Caco-2 (cell line): ENCODE measurements at regions of chr20 and their contacts with region 1.

Region 1: GRCh38 chr20:48556956-48557355 is 270.8 kb downstream of the PREX1 start:
- DNase-seq: no peak
- H3K4me3 ChIP-seq: no peak overlapping the region
- H3K4me3 Mint-ChIP-seq: no peak overlapping the region
- H3K27ac Mint-ChIP-seq: no peak overlapping the region
- H3K4me1 ChIP-seq: peaks cover 7% of the 10 kb centered on the region; the same call in 1 of the 2 replicates
- H3K4me1 Mint-ChIP-seq: peaks cover 5% of the 10 kb centered on the region
- H3K27me3 ChIP-seq: no peaks in the 10 kb centered on the region
- H3K27me3 Mint-ChIP-seq: no peaks in the 10 kb centered on the region
- CTCF ChIP-seq: no peak

Region 2: GRCh38 chr20:49199729-49200293 is 642.9 kb after region 1 on chr20:
- CTCF ChIA-PET with region 1: no interaction called
- POLR2A ChIA-PET with region 1: interaction called, 10 read pairs
- intact Hi-C with region 1: no loop called
- DNase-seq: peak in 1 of 2 experiments; percentile 12
- H3K4me3 ChIP-seq: no peak overlapping the region
- H3K4me3 Mint-ChIP-seq: no peak overlapping the region
- H3K27ac Mint-ChIP-seq: no peak overlapping the region
- H3K4me1 ChIP-seq: no peaks in the 10 kb centered on the region
- H3K4me1 Mint-ChIP-seq: no peaks in the 10 kb centered on the region
- H3K27me3 ChIP-seq: no peaks in the 10 kb centered on the region
- H3K27me3 Mint-ChIP-seq: no peaks in the 10 kb centered on the region
- CTCF ChIP-seq: no peak